Activated T-helper 1 cell treated with anti-CD3 and anti-CD28 coated beads, Interleukin-12 subunit alpha, Interleukin-12 subunit beta, Interleukin-2, Interleukin-4 antibody, amounts not matched to agents 30 ng/mL and 10 ng/mL and 1 ng/mL, durations not matched to agents 14 hours and 24 hours and 36 hours (primary cell): ENCODE measurements at regions of chr21 and their contacts with region 1.

Region 1: GRCh38 chr21:31098576-31099005 is 60.3 kb upstream of the KRTAP19-8 start:
- DNase-seq: peak; percentile 57
- H3K4me3 Mint-ChIP-seq: no peak overlapping the region
- H3K27ac Mint-ChIP-seq: no peak overlapping the region
- H3K4me1 Mint-ChIP-seq: peaks cover 25% of the 10 kb centered on the region
- H3K27me3 Mint-ChIP-seq: peaks cover 17% of the 10 kb centered on the region

Region 2: DNA sequence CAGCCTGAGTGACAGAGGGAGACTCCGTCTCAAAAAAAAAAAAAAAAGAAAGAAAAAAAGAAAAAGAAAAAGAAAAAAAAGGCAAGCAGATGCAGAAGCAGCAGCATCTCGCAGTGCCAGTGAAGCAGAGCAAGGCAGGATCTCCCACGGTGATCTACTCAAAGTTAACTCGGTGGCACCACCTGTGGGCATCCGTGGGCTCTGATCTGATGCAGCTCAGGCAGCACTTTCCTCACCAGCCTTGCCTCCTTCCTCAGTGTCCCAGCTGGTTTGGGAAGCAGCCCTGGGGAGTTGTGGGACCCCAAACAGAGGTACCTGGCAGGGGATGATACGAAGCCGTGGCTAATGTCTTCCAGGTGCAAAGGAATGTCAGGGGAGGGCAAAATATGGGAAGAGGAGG is 44.0 kb after region 1 on chr21:
- intact Hi-C with region 1: loop called (anchors 1 kb)
- DNase-seq: no peak
- H3K4me3 Mint-ChIP-seq: no peak overlapping the region
- H3K27ac Mint-ChIP-seq: no peak overlapping the region
- H3K4me1 Mint-ChIP-seq: peaks cover 42% of the 10 kb centered on the region
- H3K27me3 Mint-ChIP-seq: no peaks in the 10 kb centered on the region

Region 3: DNA sequence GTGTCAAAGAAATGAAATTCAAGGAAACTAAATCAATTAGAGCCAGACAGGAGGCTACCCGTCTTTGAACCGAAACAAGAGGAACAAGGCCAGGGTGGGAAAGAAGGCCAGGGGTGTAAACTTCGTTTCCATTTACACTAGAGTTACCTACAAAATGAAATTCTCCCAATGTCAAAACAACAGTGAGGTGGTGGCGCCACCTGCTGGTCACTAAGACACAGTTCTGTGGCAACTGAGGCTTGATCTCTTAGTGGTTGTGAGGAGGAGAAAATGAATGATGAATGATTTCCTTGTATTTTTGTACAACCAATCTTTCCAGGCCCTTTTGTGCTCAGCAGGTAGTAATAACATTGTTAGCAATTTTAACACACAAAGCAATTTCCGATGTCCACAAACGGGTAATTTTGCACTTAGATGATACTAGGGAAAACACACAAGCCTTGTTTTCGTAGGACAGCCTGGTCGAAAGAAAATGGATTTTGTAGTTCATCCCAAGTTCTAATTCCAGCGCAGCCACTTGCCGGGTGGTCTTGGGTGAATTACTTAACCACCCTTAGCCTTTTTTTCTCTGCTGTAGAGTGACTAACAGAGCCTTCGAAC is 506.1 kb after region 1 on chr21:
- intact Hi-C with region 1: loop called (anchors 1 kb)
- DNase-seq: peak; percentile 39
- H3K4me3 Mint-ChIP-seq: no peak overlapping the region
- H3K27ac Mint-ChIP-seq: no peak overlapping the region
- H3K4me1 Mint-ChIP-seq: peaks cover 7% of the 10 kb centered on the region
- H3K27me3 Mint-ChIP-seq: peaks cover 11% of the 10 kb centered on the region